ENCODE measurements at regions of chr2 and their contacts with region 1.

Region 1: GRCh38 chr2:181715033-181715630 is 34.8 kb upstream of the NEUROD1 start:
- H3K4me3 Mint-ChIP-seq: no peak overlapping the region
- H3K27ac Mint-ChIP-seq: no peak overlapping the region
- H3K4me1 Mint-ChIP-seq: no peaks in the 10 kb centered on the region
- H3K27me3 Mint-ChIP-seq: no peaks in the 10 kb centered on the region

Region 2: DNA sequence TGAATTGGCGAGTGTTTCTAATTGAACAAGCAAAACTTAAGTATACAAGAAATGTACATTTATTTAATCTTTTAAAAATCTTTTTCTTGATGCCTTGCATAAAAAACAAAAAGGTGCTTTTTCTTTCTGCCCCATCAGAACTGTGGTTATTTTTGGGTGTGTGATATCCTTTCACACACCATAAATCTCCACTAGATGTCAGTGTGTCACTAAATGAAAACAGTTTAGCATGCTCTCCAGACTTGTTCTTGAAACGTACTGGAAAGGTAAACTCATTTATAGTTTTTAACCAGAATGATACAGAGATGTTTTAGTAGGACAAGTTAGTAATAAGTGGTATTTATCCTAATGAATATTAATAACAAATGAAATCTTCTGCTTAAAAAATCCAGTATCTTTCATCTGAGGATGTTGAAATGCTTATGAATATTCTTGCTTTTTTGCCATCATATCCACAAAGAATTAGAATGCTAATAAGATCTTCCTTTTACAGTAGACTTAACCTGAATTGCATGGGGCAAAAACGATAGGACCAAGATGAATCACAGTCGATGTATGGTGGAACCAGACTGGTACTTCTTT is 637.9 kb before region 1 on chr2:
- intact Hi-C with region 1: loop called (anchors 2 kb)
- H3K4me3 Mint-ChIP-seq: no peak overlapping the region
- H3K27ac Mint-ChIP-seq: no peak overlapping the region
- H3K4me1 Mint-ChIP-seq: peaks cover 15% of the 10 kb centered on the region
- H3K27me3 Mint-ChIP-seq: no peaks in the 10 kb centered on the region

Region 3: DNA sequence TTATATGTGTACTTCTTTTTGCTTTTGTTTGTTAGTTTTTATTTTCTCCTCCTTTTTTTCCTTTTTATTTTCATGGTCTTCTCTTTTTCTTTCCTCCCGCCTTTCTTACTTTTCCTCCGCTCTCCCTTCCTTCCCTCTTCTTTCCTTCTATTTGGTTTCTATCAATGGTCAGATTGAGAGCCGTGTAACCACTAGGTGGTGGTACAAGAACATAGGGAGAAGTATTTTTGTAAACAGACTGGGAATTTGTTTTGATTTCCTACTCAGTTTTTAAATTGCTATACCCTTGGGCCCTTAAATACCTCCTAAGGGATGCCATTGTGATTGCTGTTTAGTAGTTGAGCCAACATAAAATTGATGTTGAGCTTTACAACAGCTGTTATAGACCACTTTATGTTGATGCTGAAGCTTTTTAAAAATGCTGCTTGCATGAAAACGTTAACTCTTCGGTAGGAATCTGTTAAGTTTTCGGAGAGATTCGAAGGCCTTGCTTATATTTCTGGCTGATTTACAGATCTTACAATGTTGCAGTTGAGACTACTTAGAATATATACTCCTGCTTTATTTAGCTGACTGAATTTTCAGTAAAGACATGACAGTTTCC is 610.5 kb before region 1 on chr2:
- intact Hi-C with region 1: loop called (anchors 1 kb)
- H3K4me3 Mint-ChIP-seq: no peak overlapping the region
- H3K27ac Mint-ChIP-seq: no peak overlapping the region
- H3K4me1 Mint-ChIP-seq: peaks cover 14% of the 10 kb centered on the region
- H3K27me3 Mint-ChIP-seq: no peaks in the 10 kb centered on the region

Region 4: GRCh38 chr2:181305301-181306123 is 409.6 kb before region 1 on chr2:
- intact Hi-C with region 1: loop called (anchors 10 kb)
- H3K4me3 Mint-ChIP-seq: no peak overlapping the region
- H3K27ac Mint-ChIP-seq: peak overlapping the region; percentile 45
- H3K4me1 Mint-ChIP-seq: peaks cover 35% of the 10 kb centered on the region
- H3K27me3 Mint-ChIP-seq: no peaks in the 10 kb centered on the region

Region 5: DNA sequence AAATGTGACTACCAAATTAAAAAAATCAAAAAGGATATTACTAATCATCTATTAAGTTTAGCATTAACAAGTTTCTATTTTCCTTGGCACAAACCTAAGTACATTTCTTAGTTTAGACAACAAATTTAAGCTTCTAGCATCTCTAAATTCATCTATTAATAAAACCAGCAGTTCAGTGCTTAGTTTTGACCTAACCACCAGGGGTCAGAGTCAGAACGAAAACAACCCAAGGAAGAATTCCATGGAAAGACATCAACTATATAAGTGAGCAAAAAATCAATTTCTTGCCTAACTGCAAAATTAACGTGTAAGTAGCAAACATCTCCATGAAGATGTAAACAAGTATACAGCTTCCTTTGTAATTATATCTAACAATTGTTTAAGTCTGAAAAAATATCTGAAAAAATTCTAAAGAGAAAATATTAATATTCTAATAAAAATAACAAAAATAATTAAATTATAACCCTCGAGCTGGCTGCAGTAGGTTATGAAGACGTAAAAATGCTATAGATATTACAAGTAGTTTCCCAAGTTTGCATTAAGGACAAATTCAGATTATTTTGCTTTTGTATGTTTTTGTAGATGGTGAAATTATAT is 141.9 kb before region 1 on chr2:
- intact Hi-C with region 1: loop called (anchors 2 kb)
- H3K4me3 Mint-ChIP-seq: no peak overlapping the region
- H3K27ac Mint-ChIP-seq: no peak overlapping the region
- H3K4me1 Mint-ChIP-seq: no peaks in the 10 kb centered on the region
- H3K27me3 Mint-ChIP-seq: no peaks in the 10 kb centered on the region